ENCODE measurements at regions of chr17 and their contacts with region 1.

Region 1: DNA sequence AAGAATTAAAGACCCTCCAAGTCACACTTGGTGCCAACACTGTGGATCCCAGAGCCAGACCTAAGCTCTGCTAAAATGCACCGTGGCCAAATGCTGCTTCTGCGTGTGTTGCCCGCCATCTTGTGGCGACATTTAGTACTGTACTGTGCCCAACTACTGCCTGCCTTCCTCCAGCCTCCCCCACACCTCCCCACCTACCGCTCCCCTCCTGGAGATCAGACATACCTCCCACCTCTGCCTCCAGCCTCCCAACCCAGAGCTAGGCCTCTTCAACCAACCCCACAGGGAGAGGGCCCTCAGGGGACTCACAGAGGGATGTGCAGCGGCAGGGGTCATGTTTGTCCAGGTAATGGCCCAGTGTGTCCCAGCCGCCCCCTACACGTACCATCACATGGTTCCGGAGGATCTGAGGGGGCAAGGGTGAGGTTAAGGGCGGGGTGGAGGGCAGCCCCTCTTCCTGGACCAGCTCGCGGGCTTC is 5.5 kb downstream of the GAS2L2 start:
- DNase-seq: peak; percentile 88
- CTCF ChIP-seq: peak; percentile 85

Region 2: DNA sequence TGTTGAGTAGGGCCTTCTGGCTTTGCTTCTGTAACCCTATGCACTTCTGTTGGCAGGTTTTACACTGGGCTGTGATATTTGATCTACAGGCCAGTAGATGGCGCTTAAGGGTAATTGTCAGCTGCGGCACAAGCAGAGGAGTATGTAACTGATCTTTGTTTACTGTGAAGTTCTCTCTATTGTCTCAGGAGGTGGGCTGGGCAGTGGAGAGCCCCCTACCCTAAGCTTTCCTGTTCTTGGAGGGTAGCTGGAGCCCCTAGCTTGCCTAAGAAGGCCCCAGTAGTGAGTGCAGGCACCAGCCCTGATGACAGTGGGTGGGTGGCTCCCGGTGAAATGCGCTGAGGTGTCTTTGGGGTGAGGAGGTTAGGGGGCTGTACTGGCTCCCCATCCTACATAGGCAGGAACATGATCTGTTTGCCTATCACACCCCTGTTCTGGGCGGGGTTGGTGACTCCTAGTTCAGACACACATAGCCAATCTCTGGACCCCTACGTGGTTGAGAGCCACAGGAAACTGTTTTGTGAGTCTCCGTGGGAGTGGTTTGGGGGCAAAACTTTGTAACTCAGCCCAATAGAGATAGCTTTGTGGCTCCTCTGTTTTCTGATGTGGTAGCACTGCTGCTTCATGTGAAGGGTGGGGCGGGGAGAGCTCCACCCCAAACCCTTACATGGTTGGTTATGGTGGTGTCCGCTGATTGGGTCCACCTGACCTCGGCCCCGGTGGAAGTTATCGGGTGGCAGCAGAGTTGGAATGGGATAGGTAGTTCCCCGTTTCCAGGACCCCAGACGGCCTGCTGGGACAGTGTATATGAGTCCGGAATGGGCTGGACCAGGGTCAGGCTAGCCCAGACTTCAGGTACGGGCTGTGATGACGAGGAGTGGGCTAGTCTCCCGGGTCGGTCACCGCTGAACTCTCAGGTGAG is 434.5 kb before region 1 on chr17:
- CTCF ChIA-PET with region 1: interaction called, 14 read pairs
- POLR2A ChIA-PET with region 1: no interaction called
- DNase-seq: peak; percentile 70
- CTCF ChIP-seq: peak; percentile 76

Region 3: DNA sequence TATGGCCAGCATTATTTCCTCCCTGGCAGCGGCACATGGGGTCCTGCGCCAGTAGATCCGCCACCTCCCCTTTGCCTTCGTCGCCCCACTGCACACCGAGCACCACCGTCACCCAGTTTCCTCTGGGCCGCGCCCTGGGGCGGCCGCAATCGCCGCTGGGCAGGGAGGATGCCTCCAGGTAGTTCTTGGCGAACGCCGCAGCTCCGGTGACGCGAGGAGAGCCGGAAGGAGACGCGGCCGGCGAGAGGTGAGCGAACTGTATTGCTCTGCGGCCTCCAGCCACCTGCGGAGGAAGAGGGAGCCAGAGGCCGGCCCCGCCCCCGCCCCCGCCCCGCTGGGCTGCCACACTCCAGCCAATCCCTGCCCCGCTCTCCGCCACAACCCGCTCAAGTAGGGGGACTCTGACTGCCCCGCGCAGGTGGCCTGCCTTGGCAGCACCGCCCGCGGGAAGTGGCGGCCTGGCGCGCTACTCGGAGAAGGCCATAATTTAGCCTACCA is 287.2 kb before region 1 on chr17:
- CTCF ChIA-PET with region 1: no interaction called
- POLR2A ChIA-PET with region 1: no interaction called
- DNase-seq: peak; percentile 89
- CTCF ChIP-seq: no peak

Region 4: GRCh38 chr17:35612924-35613521 is 134.6 kb before region 1 on chr17:
- CTCF ChIA-PET with region 1: interaction called, 107 read pairs
- POLR2A ChIA-PET with region 1: interaction called, 4 read pairs
- DNase-seq: peak; percentile 20
- CTCF ChIP-seq: peak; percentile 69

Region 5: GRCh38 chr17:35716897-35717465 is 30.6 kb before region 1 on chr17:
- CTCF ChIA-PET with region 1: interaction called, 15 read pairs
- POLR2A ChIA-PET with region 1: interaction called, 3 read pairs
- DNase-seq: no peak
- CTCF ChIP-seq: no peak

Region 6: DNA sequence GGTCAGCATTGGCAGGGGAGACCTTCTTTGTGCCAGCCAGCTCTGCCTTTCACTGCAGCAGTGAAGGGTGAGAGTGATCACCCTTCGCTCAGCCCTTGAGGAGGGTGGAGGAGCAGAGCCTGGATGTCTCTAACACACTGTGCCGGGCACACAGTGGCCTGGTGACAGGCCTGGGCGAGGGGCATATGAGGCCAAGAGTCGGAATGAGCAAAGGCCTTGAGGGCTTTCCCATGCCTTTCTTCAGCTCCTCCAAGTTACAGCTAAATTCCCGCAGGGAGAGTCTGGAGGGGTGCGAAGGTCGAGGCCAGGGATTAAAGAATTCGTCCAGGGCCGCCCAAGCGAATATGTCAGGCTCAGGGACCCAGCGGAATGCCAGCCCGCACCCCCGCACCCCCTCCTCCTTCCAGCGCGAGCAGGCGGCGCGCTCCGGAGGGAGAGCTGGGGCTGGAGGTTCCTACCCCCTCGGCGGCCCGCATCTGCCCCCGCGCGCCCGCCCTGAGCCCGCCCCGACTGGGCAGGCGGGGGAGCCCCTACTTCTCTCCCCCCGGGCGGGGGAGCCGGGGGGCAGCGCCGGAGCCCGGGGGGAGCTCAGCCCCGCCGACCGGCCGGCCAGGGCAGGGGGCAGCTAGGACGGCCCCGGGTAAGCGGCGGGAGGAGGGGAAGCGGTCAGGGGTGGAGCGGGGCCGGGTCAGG is 16.2 kb before region 1 on chr17 and contains the start of gene RASL10B:
- CTCF ChIA-PET with region 1: interaction called, 18 read pairs
- POLR2A ChIA-PET with region 1: no interaction called
- DNase-seq: peak; percentile 53
- CTCF ChIP-seq: no peak

Region 7: GRCh38 chr17:35841505-35841904 is 93.9 kb after region 1 on chr17:
- CTCF ChIA-PET with region 1: no interaction called
- POLR2A ChIA-PET with region 1: no interaction called
- DNase-seq: no peak
- CTCF ChIP-seq: no peak